CD8-positive, alpha-beta T cell (primary cell): ENCODE measurements at regions of chr16 and their contacts with region 1.

Region 1: GRCh38 chr16:667780-668518 is at the start of gene RHOT2:
- DNase-seq: peak; percentile 83 to 96 (median 92)
- ATAC-seq: peak; percentile 92
- H3K4me3 ChIP-seq: peak within 1 kb of the TSS; percentile 62 to 85
- H3K4me3 Mint-ChIP-seq: peak within 1 kb of the TSS; percentile 79
- H3K27ac ChIP-seq: peak within 1 kb of the TSS; percentile 37 to 68
- H3K27ac Mint-ChIP-seq: peak within 1 kb of the TSS; percentile 84
- H3K4me1 ChIP-seq: peaks cover 22% of the 10 kb centered on the region
- H3K4me1 Mint-ChIP-seq: peaks cover 12% of the 10 kb centered on the region
- H3K27me3 ChIP-seq: no peaks in the 10 kb centered on the region
- H3K27me3 Mint-ChIP-seq: no peaks in the 10 kb centered on the region
- CTCF ChIP-seq: peak; percentile 65
- total RNA-seq, gene RHOT2: 163 to 175 TPM

Region 2: GRCh38 chr16:648781-649589 is 19.0 kb before region 1 on chr16 and contains the start of gene WDR90:
- CTCF ChIA-PET with region 1: interaction called, 4 read pairs
- POLR2A ChIA-PET with region 1: interaction called, 4 read pairs
- intact Hi-C with region 1: loop called (anchors 1 to 2 kb)
- DNase-seq: peak; percentile 74 to 96 (median 92)
- ATAC-seq: peak; percentile 91
- H3K4me3 ChIP-seq: peak within 1 kb of the TSS; percentile 66 to 88
- H3K4me3 Mint-ChIP-seq: peak within 1 kb of the TSS; percentile 79
- H3K27ac ChIP-seq: peak within 1 kb of the TSS; percentile 72 to 91
- H3K27ac Mint-ChIP-seq: peak within 1 kb of the TSS; percentile 81
- H3K4me1 ChIP-seq: peaks cover 19% of the 10 kb centered on the region
- H3K4me1 Mint-ChIP-seq: peaks cover 20% of the 10 kb centered on the region
- H3K27me3 ChIP-seq: no peaks in the 10 kb centered on the region
- H3K27me3 Mint-ChIP-seq: no peaks in the 10 kb centered on the region
- CTCF ChIP-seq: no peak
- total RNA-seq, gene WDR90: 15.0 to 22.8 TPM

Region 3: GRCh38 chr16:689175-689901 is 21.4 kb after region 1 on chr16:
- CTCF ChIA-PET with region 1: interaction called, 3 read pairs
- POLR2A ChIA-PET with region 1: interaction called, 10 read pairs
- intact Hi-C with region 1: loop called in 1 of 2 experiments (anchors 1 kb)
- DNase-seq: no peak
- ATAC-seq: no peak
- H3K4me3 ChIP-seq: peak overlapping the region; percentile 86 to 87
- H3K4me3 Mint-ChIP-seq: peak overlapping the region; percentile 90
- H3K27ac ChIP-seq: peak overlapping the region; percentile 58 to 83
- H3K27ac Mint-ChIP-seq: peak overlapping the region; percentile 91
- H3K4me1 ChIP-seq: peaks cover 26% of the 10 kb centered on the region
- H3K4me1 Mint-ChIP-seq: peaks cover 26% of the 10 kb centered on the region
- H3K27me3 ChIP-seq: peaks cover 0 to 3% of the 10 kb centered on the region in 2 experiments
- H3K27me3 Mint-ChIP-seq: no peaks in the 10 kb centered on the region
- CTCF ChIP-seq: no peak

Region 4: GRCh38 chr16:799948-800833 is 132.2 kb after region 1 on chr16 and contains the start of gene GNG13:
- CTCF ChIA-PET with region 1: no interaction called
- POLR2A ChIA-PET with region 1: no interaction called
- intact Hi-C with region 1: no loop called
- DNase-seq: no peak
- ATAC-seq: no peak
- H3K4me3 ChIP-seq: no peak within 1 kb of the TSS
- H3K4me3 Mint-ChIP-seq: no peak within 1 kb of the TSS
- H3K27ac ChIP-seq: no peak within 1 kb of the TSS
- H3K27ac Mint-ChIP-seq: no peak within 1 kb of the TSS
- H3K4me1 ChIP-seq: no peaks in the 10 kb centered on the region
- H3K4me1 Mint-ChIP-seq: no peaks in the 10 kb centered on the region
- H3K27me3 ChIP-seq: peaks cover 9 to 15% of the 10 kb centered on the region in 2 experiments
- H3K27me3 Mint-ChIP-seq: peaks cover 7% of the 10 kb centered on the region
- CTCF ChIP-seq: no peak
- total RNA-seq, gene GNG13: not detected